Heart left ventricle (tissue), 16 donors: ENCODE measurements at regions of chr1 and their contacts with region 1.

Region 1: GRCh38 chr1:26066857-26067256 is 573 bp downstream of the TRIM63 start:
- DNase-seq: peak; percentile 77 to 90 (median 85)
- ATAC-seq: peak; percentile 88 to 92 (median 91)
- H3K4me3 ChIP-seq: peak overlapping the region; percentile 43 to 91 (median 63)
- H3K27ac ChIP-seq: peak overlapping the region; percentile 71 to 100 (median 88)
- H3K4me1 ChIP-seq: peaks cover 0 to 21% (median 0%) of the 10 kb centered on the region in 12 donors
- H3K27me3 ChIP-seq: peaks cover 0 to 19% (median 0%) of the 10 kb centered on the region in 9 donors
- CTCF ChIP-seq: no peak
- POLR2A ChIP-seq: no peak

Region 2: GRCh38 chr1:26083246-26083645 is 16.4 kb after region 1 on chr1:
- intact Hi-C with region 1: loop called in 1 of 10 experiments (anchors 1 kb)
- DNase-seq: peak in 4 of 5 donors; percentile 48 to 72 (median 58)
- ATAC-seq: peak; percentile 83 to 86 (median 84)
- H3K4me3 ChIP-seq: peak overlapping the region in 1 of 12 donors; percentile 8
- H3K27ac ChIP-seq: peak overlapping the region; percentile 67 to 93 (median 78)
- H3K4me1 ChIP-seq: peaks cover 0 to 37% (median 0%) of the 10 kb centered on the region in 12 donors
- H3K27me3 ChIP-seq: no peaks in the 10 kb centered on the region
- CTCF ChIP-seq: no peak
- POLR2A ChIP-seq: peak in 1 of 2 donors; percentile 48